Mucosa of descending colon (tissue), 3 donors: ENCODE measurements at regions of chr15 and their contacts with region 1.

Region 1: DNA sequence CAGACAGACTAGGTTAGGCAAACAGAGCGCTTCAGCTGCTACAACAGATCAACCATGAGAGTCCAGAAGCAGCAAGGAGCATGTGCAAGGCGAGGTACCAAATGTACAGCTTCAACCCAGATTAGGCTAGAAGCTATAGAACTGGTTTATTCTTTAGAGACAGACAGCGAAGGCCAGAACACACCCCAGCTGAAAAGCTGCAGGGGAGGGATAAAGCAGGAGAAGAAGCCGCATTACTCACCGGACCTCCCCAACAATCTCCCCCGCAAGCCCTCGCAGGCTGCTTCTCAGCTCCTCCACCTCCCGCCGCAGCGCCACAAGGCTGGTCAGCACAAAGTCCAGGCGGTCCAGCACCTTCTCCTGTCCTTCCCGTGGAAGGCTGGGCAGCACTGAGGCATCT is 3.3 kb downstream of the RMDN3 start:
- DNase-seq: no peak
- ATAC-seq: no peak
- H3K4me3 ChIP-seq: no peak overlapping the region
- H3K4me1 ChIP-seq: peaks cover 19% of the 10 kb centered on the region
- CTCF ChIP-seq: no peak

Region 2: GRCh38 chr15:40776522-40777137 is 24.9 kb after region 1 on chr15:
- intact Hi-C with region 1: loop called in 1 of 2 experiments (anchors 1 kb)
- DNase-seq: peak in 2 of 3 donors; percentile 26 to 51
- ATAC-seq: peak; percentile 51
- H3K4me3 ChIP-seq: no peak overlapping the region
- H3K4me1 ChIP-seq: no peaks in the 10 kb centered on the region
- CTCF ChIP-seq: no peak